Sigmoid colon (tissue), 7 donors: ENCODE measurements at regions of chrX and their contacts with region 1.

Region 1: DNA sequence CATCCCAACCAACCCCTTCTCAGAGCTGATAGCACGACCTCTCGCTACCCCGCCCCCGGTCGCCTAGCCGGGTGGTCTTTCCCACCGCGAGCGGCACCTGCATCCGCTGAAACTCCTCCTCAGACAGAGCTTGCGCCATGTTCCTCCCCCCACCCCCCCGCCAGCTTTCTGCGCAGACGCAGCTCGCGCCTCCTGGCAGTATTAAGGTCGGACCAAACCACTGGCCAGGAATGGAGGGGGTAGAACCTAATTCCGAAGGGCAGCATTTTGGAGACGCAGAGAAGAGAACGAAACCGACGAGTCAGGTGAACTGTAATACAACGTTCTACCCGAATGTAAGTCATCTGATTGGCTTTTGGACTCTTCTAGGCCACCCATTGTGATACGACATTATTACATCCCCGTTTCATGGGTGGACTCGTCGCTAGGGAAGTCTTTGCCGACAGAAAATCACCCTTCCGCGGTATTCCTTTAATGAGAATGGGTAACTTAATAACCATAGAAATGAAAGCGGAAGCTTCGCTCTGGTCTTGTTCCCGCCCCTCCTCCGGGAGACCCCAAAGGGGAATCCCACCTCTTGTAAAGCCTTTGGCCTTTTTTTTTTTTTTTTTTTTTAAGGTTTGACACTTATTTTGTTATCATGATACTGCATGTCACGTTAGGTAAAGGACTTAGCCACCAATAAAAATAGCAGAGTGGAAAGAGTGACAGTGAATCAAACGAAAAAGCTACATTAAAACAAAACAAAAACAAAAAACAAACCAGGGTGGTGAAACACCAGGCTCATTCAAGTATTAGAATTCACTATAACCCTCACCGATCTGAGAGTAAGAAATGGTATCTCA is at the start of gene GRIPAP1:
- DNase-seq: peak; percentile 77
- H3K4me3 ChIP-seq: peak within 1 kb of the TSS; percentile 57 to 67 (median 63)
- H3K27ac ChIP-seq: peak within 1 kb of the TSS; percentile 69 to 84 (median 75)
- H3K4me1 ChIP-seq: peaks cover 0 to 9% (median 6%) of the 10 kb centered on the region in 4 donors
- H3K27me3 ChIP-seq: no peaks in the 10 kb centered on the region
- CTCF ChIP-seq: no peak
- EP300 ChIP-seq: no peak
- POLR2A ChIP-seq: peak; percentile 60 to 65
- total RNA-seq, gene GRIPAP1: 19.7 to 63.1 (median 29.7) TPM

Region 2: DNA sequence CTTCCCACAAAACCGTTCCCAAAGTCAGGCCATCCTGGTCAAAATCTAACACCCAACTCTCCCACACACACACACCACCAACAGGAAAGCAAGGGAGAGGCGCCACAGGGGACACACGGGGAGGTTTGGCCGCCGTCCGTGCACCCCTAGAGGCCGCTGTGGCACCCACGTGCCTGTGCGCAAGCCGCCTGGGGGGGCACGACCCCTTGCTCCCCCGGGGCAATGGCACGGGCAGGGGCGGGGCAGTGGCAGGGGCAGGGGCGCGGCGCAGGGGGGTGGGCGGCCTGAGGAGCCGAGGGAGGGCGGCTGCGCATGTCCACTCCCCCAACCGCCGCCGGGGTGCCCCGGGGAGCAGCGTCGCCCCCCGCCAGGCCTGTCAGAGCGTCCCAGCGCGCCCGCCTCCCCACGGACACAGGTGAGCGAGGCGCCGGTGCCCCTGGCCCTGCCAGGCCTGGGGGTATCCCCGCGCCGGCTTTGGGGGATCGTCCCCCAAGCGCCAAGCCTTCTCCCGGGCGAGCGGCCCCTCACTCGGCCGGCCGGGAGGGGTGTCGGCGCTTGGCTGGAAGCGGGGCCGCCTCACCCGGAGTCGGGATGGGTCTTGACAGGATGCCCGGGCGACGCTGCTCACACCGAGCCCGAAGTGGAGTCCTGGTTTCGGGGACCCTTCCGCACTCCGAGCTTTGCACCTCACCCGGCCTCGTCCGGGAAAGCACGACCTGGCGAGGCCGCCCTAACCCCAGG is 176.0 kb before region 1 on chrX and contains the start of gene ERAS:
- intact Hi-C with region 1: no loop called
- DNase-seq: no peak
- H3K4me3 ChIP-seq: no peak within 1 kb of the TSS
- H3K27ac ChIP-seq: no peak within 1 kb of the TSS
- H3K4me1 ChIP-seq: no peaks in the 10 kb centered on the region
- H3K27me3 ChIP-seq: peaks cover 4 to 8% (median 5%) of the 10 kb centered on the region in 3 donors
- CTCF ChIP-seq: no peak
- EP300 ChIP-seq: no peak
- POLR2A ChIP-seq: no peak
- total RNA-seq, gene ERAS: not detected

Region 3: GRCh38 chrX:49079489-49080428 is 77.4 kb after region 1 on chrX and contains the start of gene WDR45:
- intact Hi-C with region 1: loop called (anchors 2 kb)
- DNase-seq: peak; percentile 88
- H3K4me3 ChIP-seq: peak within 1 kb of the TSS; percentile 53 to 69 (median 60)
- H3K27ac ChIP-seq: peak within 1 kb of the TSS; percentile 85 to 93 (median 90)
- H3K4me1 ChIP-seq: peaks cover 0 to 10% (median 7%) of the 10 kb centered on the region in 4 donors
- H3K27me3 ChIP-seq: no peaks in the 10 kb centered on the region
- CTCF ChIP-seq: no peak
- EP300 ChIP-seq: no peak
- POLR2A ChIP-seq: peak; percentile 68 to 76
- total RNA-seq, gene WDR45: 78.5 to 102 (median 93.5) TPM

Region 4: DNA sequence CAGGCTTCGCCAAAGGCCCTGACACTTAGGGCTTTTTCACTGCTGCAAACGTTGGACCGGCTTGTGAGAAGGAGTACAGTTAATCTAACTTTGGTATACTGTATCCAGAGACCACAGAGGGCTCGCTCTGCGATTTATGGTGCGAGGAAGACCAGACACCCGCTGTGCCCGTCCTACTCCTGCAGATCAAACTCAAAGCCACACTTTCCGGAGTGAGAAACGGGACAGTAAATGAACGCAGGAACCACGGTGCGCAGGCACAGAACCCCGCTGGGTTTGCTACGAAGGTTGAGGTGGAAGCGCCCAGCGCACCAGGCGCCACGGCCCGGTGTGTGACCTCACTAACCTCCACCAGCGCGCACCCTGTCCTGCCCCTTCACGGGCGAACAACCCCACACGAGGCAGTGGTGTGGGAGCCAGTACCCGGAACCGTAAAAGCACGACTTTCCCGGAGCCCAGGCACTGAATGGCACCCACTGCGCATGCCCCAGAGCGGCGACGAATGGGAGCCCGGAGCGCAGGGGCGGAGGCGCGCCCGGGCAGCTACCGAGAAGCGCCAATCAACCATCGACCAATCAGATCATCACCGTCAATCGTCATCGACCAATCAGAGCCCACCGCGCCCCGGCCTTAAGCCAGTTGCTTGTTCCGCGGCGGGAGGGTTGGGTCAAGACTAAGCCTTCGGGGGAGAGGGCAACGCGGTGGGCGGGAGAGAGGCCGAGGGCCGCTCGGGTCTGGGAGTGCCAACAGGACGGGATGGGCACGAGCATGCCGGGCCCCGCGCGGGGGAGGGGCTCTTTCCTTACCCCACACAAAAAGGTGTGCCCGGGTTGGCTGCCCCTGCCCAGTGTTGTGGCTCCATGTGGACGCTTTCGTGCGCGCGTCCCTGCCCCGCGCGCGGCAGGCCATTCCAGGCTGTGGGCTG is 98.7 kb after region 1 on chrX:
- intact Hi-C with region 1: loop called (anchors 10 kb)
- DNase-seq: peak; percentile 95
- H3K4me3 ChIP-seq: peak overlapping the region; percentile 47 to 59 (median 55)
- H3K27ac ChIP-seq: peak overlapping the region; percentile 77 to 85 (median 82)
- H3K4me1 ChIP-seq: peaks cover 0 to 3% (median 0%) of the 10 kb centered on the region in 4 donors
- H3K27me3 ChIP-seq: no peaks in the 10 kb centered on the region
- CTCF ChIP-seq: no peak
- EP300 ChIP-seq: no peak
- POLR2A ChIP-seq: peak in 1 of 2 donors; percentile 36